BJ (cell line): ENCODE measurements at regions of chr4 and their contacts with region 1.

Region 1: DNA sequence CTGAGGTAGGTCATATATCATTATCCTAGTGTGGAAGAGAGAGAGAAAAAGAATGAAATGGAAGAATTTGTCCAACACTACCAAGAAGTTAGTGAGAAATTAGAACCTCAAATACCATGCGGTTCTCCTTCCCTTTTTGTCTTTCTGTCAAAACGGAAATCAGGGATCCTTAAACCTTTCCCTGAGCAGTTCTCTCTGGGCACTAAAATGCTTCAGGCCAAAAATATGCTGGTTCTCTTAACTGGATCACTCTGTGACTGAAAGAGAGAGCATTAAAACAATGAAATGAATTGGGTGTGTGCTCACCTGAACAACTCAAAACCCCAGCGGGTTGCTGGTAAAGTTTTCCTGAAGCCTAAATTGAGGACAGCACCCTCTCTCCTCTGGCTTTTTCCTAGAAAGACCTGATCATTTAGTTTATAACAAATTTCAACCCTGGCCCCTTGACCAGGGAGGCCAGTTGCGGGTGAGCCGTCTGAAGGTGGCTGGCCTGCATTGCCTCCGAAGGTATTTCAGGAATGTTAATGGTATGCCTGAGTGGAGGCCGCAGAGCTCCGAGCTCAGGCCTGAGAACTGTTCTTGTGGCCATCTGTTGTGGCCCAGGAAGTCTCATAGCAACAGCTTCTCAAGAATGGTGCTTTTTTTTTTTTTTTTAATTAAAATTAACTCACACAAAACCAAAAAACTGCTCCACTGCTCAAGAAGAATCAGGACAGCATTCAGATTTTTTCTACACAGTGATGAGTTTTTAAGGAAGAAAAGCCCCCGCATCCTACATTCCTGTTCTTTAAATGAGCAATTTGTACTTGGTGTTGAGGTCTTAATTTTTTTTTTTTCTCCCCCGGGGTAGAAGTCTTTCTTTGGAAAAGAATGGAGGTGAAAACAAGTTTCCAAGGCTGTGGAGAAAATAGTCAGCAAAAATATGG is 155.1 kb downstream of the SHROOM3 start:
- DNase-seq: peak; percentile 95
- H3K4me3 ChIP-seq: no peak overlapping the region
- H3K27me3 ChIP-seq: no peaks in the 10 kb centered on the region
- CTCF ChIP-seq: no peak

Region 2: DNA sequence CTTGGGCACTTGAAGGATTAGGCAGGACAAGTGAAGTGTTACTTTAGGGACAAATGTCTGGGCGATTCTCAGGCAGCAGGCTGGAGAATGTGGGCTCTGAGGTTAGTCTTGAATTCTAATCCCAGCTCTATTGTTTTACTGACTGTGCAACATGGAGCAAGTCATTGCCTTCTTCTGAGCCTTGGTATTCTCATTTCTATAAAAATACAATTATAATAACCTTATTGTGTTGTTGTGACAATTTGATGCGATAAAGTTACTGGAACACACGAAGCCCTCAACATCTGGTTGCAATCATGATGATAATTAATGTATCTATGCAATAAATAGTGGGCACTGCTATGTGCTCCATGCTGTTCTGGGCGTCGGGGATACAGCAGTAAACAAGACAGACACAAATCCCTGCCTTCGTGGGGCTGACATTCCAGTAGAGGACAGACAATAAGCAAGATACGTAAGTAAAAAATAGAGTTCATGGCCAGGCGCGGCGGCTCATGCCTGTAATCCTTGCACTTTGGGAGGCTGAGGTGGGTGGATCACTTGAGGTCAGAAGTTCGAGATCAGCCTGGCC is 42.9 kb before region 1 on chr4:
- CTCF ChIA-PET with region 1: no interaction called
- POLR2A ChIA-PET with region 1: interaction called, 12 read pairs
- DNase-seq: no peak
- H3K4me3 ChIP-seq: no peak overlapping the region
- H3K27me3 ChIP-seq: no peaks in the 10 kb centered on the region
- CTCF ChIP-seq: no peak

Region 3: DNA sequence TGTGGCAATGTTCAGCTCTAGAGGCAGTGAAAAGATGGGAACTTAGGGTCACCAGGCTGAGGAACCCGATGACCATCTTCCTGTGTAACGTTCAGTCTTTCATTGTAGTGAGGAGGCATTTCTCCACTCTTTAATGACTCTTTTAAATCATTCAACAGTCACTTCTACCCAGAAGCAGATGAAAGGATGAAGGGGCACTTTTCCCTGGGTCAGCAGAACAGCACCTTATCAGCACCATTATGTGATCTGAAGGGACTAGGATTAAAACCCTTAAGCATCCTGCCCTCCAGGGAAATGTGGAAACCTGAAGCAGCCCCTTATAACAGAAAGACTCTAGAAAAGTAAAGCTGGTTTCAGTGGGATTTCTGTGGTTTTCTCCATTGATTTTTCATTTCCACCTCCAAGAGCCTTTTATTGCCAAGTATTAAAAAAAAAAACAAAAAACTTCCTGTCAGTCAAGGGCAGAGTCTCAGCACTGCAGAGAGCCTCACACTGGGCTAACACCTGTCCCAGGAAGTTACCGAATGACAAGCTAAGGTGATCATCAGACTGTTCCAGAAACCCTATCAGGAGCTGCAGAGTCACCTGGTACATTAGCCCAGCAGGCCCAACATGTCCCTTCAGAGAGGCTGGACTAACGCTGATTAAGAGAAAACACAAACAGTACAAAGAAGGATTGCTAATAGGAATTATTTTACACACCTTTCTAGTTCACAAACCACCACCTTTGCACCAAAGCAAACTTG is 30.8 kb after region 1 on chr4:
- CTCF ChIA-PET with region 1: interaction called, 3 read pairs
- POLR2A ChIA-PET with region 1: interaction called, 10 read pairs
- DNase-seq: no peak
- H3K4me3 ChIP-seq: no peak overlapping the region
- H3K27me3 ChIP-seq: no peaks in the 10 kb centered on the region
- CTCF ChIP-seq: no peak

Region 4: GRCh38 chr4:76738086-76738931 is 148.2 kb after region 1 on chr4:
- CTCF ChIA-PET with region 1: no interaction called
- POLR2A ChIA-PET with region 1: interaction called, 10 read pairs
- DNase-seq: peak; percentile 89
- H3K4me3 ChIP-seq: no peak overlapping the region
- H3K27me3 ChIP-seq: no peaks in the 10 kb centered on the region
- CTCF ChIP-seq: no peak